ENCODE measurements at regions of chr5 and their contacts with region 1.

Region 1: DNA sequence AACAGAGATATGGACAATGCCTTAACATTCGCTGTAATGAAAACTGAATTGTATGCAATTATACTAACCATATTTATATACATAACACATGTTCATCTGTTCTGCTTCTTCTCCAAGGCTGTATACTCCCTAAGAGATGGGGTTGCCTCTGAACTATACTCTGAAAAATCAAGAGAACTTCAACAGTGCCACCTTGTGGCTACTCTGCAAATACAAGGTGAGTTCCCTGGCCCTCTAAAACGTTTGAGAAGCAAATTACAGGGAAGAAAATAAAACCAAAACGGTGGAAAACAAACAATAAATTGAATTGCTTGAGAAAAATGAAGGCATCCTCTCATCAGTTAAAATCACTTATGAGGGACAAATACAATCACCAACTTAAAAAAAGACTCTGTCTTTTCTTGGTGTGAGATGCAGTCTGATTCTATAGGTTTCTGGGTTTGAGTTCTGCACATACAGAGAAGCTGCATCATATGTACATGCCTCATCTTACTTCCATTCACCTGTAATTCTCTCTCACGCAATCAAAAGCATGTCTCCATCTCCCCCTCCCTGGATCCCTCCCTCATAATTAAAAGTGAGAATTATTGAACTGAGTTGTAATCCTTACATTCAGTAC is 98.6 kb downstream of the FBXW11 start:
- DNase-seq: peak; percentile 15
- H3K4me3 ChIP-seq: no peak overlapping the region
- H3K27ac ChIP-seq: no peak overlapping the region
- H3K4me1 ChIP-seq: peaks cover 0 to 12% (median 1%) of the 10 kb centered on the region in 4 donors
- H3K27me3 ChIP-seq: no peaks in the 10 kb centered on the region
- CTCF ChIP-seq: peak; percentile 63 to 82 (median 77)
- EP300 ChIP-seq: no peak
- POLR2A ChIP-seq: no peak

Region 2: DNA sequence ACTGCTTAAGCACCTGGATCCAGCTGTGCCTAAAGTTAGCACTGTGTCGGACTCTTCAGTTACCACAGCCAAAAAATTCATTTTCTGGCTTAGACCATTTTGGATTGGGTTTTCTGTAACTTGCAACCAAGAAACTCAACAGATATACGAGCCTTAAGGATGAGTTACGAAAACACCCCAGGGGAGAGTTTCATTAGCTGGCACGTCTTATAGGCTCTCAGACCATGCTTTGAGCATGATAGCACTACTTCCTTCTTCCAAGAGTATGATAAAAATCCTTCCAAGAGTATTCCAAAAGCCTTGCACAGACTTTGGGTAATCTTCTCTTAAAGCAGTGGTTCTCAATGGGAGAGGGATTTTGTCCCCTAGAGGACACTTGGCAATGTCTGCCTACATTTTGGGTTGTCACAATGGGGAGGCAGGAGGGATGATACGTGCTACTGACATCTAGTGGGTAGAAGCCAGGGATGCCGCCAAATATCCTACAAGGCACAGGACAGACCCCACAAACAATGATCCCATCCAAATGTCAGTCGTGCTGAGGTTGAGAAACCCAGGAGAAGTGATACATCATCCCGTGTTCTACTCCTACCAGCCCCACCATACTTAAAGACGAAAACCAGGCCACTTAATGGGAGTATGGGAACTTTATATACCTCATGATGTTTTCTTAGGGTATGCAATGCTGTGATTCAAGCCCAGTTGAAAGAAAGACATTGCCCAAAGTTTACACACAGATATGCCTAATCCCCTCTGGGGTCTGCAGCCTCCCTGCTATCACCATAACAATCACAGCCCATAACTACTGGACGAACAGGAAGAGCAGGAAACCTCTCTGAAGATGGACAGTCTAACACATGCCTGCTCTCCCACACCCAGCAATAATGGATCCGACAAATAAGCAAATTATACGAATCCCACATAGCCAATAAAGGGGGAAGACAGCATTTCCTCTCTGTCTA is 57.2 kb before region 1 on chr5:
- in situ Hi-C with region 1: no loop called
- intact Hi-C with region 1: no loop called
- DNase-seq: no peak
- H3K4me3 ChIP-seq: no peak overlapping the region
- H3K27ac ChIP-seq: no peak overlapping the region
- H3K4me1 ChIP-seq: no peaks in the 10 kb centered on the region
- H3K27me3 ChIP-seq: no peaks in the 10 kb centered on the region
- CTCF ChIP-seq: no peak
- EP300 ChIP-seq: no peak
- POLR2A ChIP-seq: no peak

Region 3: GRCh38 chr5:172044631-172045314 is 136.9 kb after region 1 on chr5:
- in situ Hi-C with region 1: loop called (anchors 10 kb)
- intact Hi-C with region 1: loop called (anchors 10 kb)
- DNase-seq: no peak
- H3K4me3 ChIP-seq: no peak overlapping the region
- H3K27ac ChIP-seq: no peak overlapping the region
- H3K4me1 ChIP-seq: no peaks in the 10 kb centered on the region
- H3K27me3 ChIP-seq: no peaks in the 10 kb centered on the region
- CTCF ChIP-seq: no peak
- EP300 ChIP-seq: no peak
- POLR2A ChIP-seq: no peak